ENCODE measurements at regions of chr6 and their contacts with region 1.

Region 1: DNA sequence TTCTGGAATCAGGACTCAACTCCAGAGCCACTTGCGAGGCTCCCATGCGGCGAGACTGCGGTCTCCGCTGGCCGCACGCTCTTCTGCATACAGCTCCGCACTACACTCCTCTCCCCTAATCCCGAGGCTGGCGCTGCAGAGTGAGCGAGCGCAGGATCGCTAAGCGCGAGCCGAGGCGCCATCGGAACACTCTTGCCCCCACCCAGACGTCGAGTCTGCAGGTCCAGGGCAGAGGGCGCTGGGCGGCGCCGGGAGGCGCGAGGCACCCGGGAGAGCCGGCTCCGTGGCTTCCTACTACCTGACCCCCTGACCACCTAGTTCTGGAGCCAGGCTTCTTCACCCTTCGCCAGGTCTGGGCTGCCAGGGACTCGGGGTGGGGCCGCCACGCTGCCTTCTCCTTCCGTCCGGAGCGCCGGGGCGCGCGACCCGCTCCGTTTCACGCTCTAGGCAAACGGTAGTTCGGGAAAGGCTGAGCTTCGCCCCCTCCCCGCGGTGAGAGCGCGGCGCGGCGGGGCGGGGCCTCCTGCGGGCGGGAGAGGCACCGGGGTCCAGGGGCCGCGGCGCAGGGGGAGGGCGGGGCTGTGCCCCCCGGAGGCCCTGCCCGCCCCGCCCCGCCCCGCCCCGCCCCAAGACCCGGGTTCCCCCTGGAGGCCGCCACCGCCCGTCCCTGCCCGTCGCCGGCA is 5.4 kb upstream of the TUBB2A start:
- H3K4me3 ChIP-seq: peak overlapping the region; percentile 63
- H3K27ac ChIP-seq: peak overlapping the region; percentile 90
- H3K4me1 ChIP-seq: peaks cover 24% of the 10 kb centered on the region
- CTCF ChIP-seq: peak; percentile 90

Region 2: GRCh38 chr6:3176562-3177355 is 14.1 kb after region 1 on chr6:
- CTCF ChIA-PET with region 1: interaction called, 5 read pairs
- POLR2A ChIA-PET with region 1: interaction called, 20 read pairs
- H3K4me3 ChIP-seq: no peak overlapping the region
- H3K27ac ChIP-seq: no peak overlapping the region
- H3K4me1 ChIP-seq: peaks cover 4% of the 10 kb centered on the region; the same call in 1 of the 2 replicates
- CTCF ChIP-seq: no peak

Region 3: DNA sequence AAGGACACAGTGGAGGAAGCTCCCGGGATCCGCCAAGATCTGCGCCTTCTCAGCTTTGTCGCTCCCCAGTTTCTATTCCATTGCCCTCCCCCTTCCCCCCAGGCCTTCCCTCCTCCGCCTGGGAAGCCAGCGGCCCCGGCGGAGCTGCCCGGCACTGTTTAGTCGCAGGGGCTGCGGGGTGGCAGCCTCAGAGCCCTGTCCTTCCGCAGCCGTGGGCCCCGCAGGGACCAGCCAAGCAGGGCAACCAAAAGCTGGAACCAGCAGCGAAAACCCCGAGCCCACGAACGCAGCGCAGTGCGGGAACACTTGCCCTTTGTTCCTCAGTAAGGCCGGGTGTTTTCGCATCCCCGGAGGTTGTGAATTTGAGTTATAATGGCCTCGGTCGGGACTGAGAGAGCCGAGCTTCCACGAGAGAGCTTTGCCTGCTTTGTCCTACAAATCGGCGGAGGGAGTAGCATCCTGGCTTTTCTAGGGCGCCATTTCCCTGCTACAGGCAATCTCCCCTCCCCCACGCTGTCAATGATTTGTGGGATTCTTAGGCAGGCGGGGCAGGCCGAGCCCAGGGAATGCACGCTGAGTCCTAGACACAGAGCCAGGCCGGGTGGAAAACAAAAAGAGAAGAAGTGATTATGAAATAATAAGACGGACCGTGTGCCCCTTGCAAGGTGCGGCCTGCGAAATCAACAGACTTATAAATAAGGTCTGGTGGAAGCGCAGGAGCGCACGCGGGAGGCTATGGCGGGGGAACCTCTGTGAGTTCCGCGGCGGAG is 68.7 kb after region 1 on chr6:
- CTCF ChIA-PET with region 1: interaction called, 3 read pairs
- POLR2A ChIA-PET with region 1: interaction called, 17 read pairs
- H3K4me3 ChIP-seq: peak overlapping the region; percentile 71
- H3K27ac ChIP-seq: peak overlapping the region; percentile 94
- H3K4me1 ChIP-seq: peaks cover 7% of the 10 kb centered on the region; the same call in 1 of the 2 replicates
- CTCF ChIP-seq: no peak

Region 4: GRCh38 chr6:3258720-3259490 is 96.2 kb after region 1 on chr6 and contains the start of gene PSMG4:
- CTCF ChIA-PET with region 1: no interaction called
- POLR2A ChIA-PET with region 1: interaction called, 14 read pairs
- H3K4me3 ChIP-seq: peak within 1 kb of the TSS; percentile 92
- H3K27ac ChIP-seq: peak within 1 kb of the TSS; percentile 67
- H3K4me1 ChIP-seq: peaks cover 10% of the 10 kb centered on the region; the same call in 1 of the 2 replicates
- CTCF ChIP-seq: 0 out of 2 replicates have a peak, but pooled peaks have one; percentile 12

Measured in HEK293 (cell line).